ENCODE measurements at regions of chr6 and their contacts with region 1.

Region 1: DNA sequence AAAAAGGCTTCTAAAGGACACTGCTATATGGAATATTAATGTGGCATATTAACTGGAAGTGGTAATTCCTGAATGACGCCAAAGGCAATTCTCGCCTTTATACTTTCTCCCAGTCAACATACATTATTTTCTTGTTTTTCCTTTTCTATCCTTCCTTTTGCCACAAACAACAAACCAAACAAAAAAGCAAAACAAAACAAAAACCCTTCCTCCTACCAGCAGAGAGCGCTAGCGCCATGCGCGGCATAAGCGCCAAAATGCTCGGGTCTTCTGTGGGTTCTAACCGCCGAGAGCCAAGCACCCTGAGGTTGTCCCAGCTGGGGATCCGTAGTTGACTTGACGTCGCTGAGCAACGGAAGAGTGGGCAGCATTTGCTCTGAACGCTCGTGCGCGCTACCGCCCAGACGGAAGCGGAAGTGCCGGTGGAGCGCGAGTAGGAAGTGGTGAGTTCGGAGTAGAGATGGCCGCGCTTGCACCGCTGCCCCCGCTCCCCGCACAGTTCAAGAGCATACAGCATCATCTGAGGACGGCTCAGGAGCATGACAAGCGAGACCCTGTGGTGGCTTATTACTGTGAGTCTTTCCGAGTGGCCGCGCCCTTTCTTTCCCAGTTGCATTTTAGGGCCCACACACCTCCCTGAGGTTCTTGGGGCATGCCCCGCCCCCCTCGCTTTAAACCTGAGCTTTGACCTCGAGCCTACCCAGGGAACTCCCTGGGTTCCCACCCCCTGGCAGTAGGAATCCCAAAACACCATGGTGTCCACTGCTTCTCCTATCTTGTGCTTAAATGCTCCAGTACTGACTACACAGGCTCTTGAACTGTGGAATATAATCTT is at the starts of genes NMBR and VTA1:
- DNase-seq: peak; percentile 90
- ATAC-seq: peak; percentile 96
- H3K4me3 Mint-ChIP-seq: peak within 1 kb of the TSS; percentile 96
- H3K27ac Mint-ChIP-seq: peak within 1 kb of the TSS; percentile 78
- H3K4me1 Mint-ChIP-seq: peaks cover 54% of the 10 kb centered on the region
- H3K27me3 Mint-ChIP-seq: no peaks in the 10 kb centered on the region
- CTCF ChIP-seq: peak; percentile 16
- total RNA-seq, gene NMBR: not detected in 2 replicates
- total RNA-seq, gene VTA1: 30.3 and 30.4 TPM in 2 replicates

Region 2: GRCh38 chr6:141483598-141484061 is 663.4 kb before region 1 on chr6:
- CTCF ChIA-PET with region 1: no interaction called
- POLR2A ChIA-PET with region 1: no interaction called
- intact Hi-C with region 1: loop called (anchors 5 kb)
- DNase-seq: no peak
- ATAC-seq: peak; percentile 79
- H3K4me3 Mint-ChIP-seq: peak overlapping the region; percentile 78
- H3K27ac Mint-ChIP-seq: peak overlapping the region; percentile 96
- H3K4me1 Mint-ChIP-seq: peaks cover 52% of the 10 kb centered on the region
- H3K27me3 Mint-ChIP-seq: no peaks in the 10 kb centered on the region
- CTCF ChIP-seq: no peak

Region 3: DNA sequence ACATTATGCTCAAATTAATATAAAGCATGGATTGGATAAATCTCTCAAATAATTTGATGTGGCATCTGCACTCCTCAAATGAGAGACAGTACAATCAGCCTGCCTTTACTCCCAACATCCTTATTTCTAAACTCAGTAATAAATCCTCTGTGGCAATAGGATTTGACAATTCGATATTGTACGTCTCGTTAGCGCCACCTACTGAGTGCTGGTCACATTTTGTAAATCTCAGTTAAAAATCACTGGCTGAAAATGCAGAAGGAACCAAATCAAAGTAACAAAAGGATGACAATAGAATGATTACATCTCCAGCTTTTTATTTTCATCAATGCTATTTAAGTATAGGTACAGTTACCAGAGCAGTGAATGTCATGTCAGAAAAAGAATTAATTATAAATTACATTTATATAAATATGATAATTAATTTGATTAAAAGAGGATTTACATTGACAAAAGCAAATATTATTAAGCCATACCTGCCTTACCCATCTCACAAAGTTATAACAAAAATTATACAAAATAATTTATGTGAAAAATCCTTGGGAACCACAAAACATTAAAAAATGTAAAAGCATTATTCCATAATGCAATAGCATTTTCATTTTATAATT is 34.5 kb before region 1 on chr6:
- CTCF ChIA-PET with region 1: no interaction called
- POLR2A ChIA-PET with region 1: no interaction called
- intact Hi-C with region 1: no loop called
- DNase-seq: no peak
- ATAC-seq: peak; percentile 34
- H3K4me3 Mint-ChIP-seq: no peak overlapping the region
- H3K27ac Mint-ChIP-seq: no peak overlapping the region
- H3K4me1 Mint-ChIP-seq: no peaks in the 10 kb centered on the region
- H3K27me3 Mint-ChIP-seq: peaks cover 2% of the 10 kb centered on the region
- CTCF ChIP-seq: peak; percentile 70

Region 4: GRCh38 chr6:142294679-142295078 is 147.6 kb after region 1 on chr6:
- CTCF ChIA-PET with region 1: no interaction called
- POLR2A ChIA-PET with region 1: no interaction called
- intact Hi-C with region 1: no loop called
- DNase-seq: no peak
- ATAC-seq: no peak
- H3K4me3 Mint-ChIP-seq: no peak overlapping the region
- H3K27ac Mint-ChIP-seq: no peak overlapping the region
- H3K4me1 Mint-ChIP-seq: no peaks in the 10 kb centered on the region
- H3K27me3 Mint-ChIP-seq: peaks cover 9% of the 10 kb centered on the region
- CTCF ChIP-seq: no peak

Region 5: DNA sequence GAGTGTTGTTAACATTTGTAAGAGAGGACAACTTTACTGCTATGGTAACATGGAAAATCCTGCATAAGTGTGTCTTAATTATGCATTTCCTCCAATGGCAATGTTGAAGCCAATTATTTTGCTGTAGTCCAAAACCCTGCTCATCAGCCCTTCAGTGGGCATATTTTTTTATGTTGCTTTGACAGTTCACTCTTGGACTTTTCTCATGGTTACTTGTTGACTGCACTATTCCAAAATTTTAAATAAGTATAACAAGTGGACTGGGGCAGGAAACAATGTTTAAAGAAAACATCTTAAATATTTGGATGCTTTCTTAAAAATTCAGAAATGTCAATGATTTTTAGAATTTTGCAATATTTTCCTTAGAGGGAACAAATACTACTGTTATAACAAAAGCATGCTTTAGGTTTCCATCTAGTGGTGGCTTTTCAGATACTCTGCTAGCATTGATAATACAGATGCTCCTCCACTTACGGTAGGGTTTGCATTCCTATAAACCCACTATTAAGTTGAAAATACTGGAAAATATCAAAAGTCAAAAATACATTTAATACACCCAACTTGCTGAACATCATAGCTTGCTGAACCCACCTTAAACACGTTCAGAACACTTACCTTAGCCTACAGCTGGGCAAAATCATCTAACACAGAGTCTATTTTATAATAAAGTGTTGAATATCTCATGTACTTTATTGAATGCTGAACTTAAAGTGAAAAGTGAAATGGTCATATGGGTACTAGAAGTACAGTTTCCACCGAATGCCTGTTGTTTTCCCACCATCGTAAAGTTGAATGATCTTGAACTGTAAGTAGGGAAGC is 241.2 kb after region 1 on chr6:
- CTCF ChIA-PET with region 1: interaction called, 9 read pairs
- POLR2A ChIA-PET with region 1: no interaction called
- intact Hi-C with region 1: loop called (anchors 1 kb)
- DNase-seq: no peak
- ATAC-seq: no peak
- H3K4me3 Mint-ChIP-seq: no peak overlapping the region
- H3K27ac Mint-ChIP-seq: no peak overlapping the region
- H3K4me1 Mint-ChIP-seq: no peaks in the 10 kb centered on the region
- H3K27me3 Mint-ChIP-seq: peaks cover 2% of the 10 kb centered on the region
- CTCF ChIP-seq: no peak

Region 6: DNA sequence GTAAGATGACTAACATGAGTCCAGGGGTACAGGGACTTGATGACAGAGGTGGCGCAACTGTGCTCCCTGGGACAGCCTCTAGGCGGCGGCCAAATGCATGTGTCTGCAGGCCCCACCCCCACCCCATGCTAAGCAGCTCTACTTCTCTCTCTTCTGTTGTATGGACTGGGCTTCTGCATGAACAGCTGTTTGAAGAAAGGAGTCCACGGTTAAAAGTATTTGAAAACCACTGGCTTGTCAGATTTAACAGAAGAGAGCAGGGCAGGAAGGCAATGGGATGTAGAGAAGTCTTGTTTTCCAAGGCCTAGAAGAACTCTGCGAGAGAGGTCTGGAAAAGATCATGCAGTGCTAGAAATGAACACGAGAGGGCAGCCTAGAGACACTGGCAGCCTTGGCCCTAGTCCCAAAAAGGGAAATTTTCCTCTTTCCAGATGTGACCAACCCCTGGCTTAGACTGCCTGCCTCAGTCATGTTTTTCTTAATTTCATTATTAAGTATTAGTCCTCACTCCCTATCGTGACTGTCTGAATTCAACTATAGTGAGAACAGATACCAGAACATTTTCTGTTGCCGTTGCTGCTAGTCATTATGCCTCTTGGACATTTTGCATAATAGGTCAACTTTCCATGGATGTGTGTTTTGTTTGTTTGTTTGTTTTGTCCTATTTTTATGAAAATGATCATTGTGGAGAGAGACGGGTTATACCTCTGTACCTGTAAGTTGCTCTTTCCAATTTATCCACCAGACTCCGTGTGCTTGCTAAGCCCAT is 419.8 kb after region 1 on chr6:
- CTCF ChIA-PET with region 1: no interaction called
- POLR2A ChIA-PET with region 1: no interaction called
- intact Hi-C with region 1: loop called (anchors 1 kb)
- DNase-seq: no peak
- ATAC-seq: peak; percentile 66
- H3K4me3 Mint-ChIP-seq: no peak overlapping the region
- H3K27ac Mint-ChIP-seq: no peak overlapping the region
- H3K4me1 Mint-ChIP-seq: no peaks in the 10 kb centered on the region
- H3K27me3 Mint-ChIP-seq: no peaks in the 10 kb centered on the region
- CTCF ChIP-seq: peak; percentile 79

Region 7: GRCh38 chr6:143450453-143451371 is 1303.7 kb after region 1 on chr6 and contains the starts of genes ADAT2 and PEX3:
- CTCF ChIA-PET with region 1: no interaction called
- POLR2A ChIA-PET with region 1: interaction called, 3 read pairs
- intact Hi-C with region 1: loop called (anchors 1 kb)
- DNase-seq: peak; percentile 90
- ATAC-seq: peak; percentile 91
- H3K4me3 Mint-ChIP-seq: peak within 1 kb of the TSS; percentile 98
- H3K27ac Mint-ChIP-seq: peak within 1 kb of the TSS; percentile 96
- H3K4me1 Mint-ChIP-seq: peaks cover 39% of the 10 kb centered on the region
- H3K27me3 Mint-ChIP-seq: no peaks in the 10 kb centered on the region
- CTCF ChIP-seq: no peak
- total RNA-seq, gene ADAT2: 22.4 and 30.2 TPM in 2 replicates
- total RNA-seq, gene PEX3: 21.7 and 26.5 TPM in 2 replicates

Region 8: DNA sequence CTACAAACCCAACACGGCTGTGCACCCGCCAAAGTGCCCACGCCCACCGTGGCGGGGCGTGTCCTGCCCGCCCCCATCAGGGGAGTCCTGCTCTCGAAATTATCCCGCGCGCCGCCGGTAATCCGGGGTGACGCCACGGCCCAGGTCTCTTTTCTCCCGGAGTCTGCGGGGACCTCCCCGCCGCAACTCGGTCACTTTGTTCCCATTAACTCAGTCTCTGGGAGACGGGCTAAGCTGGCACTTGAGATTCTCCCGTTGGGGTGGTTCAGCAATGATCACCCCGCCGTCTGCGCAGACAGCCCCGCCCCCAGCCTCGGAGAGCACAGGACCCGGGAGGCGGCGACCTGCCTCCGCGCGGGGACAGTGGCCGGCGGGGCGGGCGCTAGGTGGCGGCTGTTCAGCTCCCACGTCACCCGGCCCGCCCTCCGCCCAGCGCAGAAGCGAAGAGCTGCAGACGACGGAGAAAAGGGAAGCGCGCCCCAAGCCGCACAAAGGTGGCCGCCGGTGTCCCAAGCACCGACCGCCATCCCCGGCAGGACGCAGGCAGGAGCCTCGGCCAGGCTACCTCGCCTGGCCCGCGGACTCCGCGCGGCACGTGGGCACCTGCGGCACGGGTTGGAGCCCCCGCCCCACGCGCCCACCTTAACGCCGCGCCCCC is 1916.8 kb after region 1 on chr6:
- CTCF ChIA-PET with region 1: no interaction called
- POLR2A ChIA-PET with region 1: no interaction called
- intact Hi-C with region 1: loop called (anchors 1 kb)
- DNase-seq: peak; percentile 91
- ATAC-seq: peak; percentile 93
- H3K4me3 Mint-ChIP-seq: peak overlapping the region; percentile 94
- H3K27ac Mint-ChIP-seq: peak overlapping the region; percentile 89
- H3K4me1 Mint-ChIP-seq: peaks cover 36% of the 10 kb centered on the region
- H3K27me3 Mint-ChIP-seq: no peaks in the 10 kb centered on the region
- CTCF ChIP-seq: no peak

Measured in activated B cell treated with CpG ODN at 0.5 μM for 24 hours (primary cell).